CD4-positive, alpha-beta memory T cell (primary cell): ENCODE measurements at regions of chrX and their contacts with region 1.

Region 1: GRCh38 chrX:136646602-136647239 is 1.2 kb upstream of the CD40LG start:
- DNase-seq: peak; percentile 60 to 79 (median 64)
- H3K4me3 ChIP-seq: peak overlapping the region in 1 of 2 donors; percentile 3
- H3K4me3 Mint-ChIP-seq: peak overlapping the region; percentile 89 to 99 (median 97)
- H3K27ac ChIP-seq: peak overlapping the region; percentile 82
- H3K27ac Mint-ChIP-seq: peak overlapping the region; percentile 66 to 97 (median 91)
- H3K4me1 ChIP-seq: peaks cover 52% of the 10 kb centered on the region
- H3K4me1 Mint-ChIP-seq: peaks cover 34 to 60% (median 43%) of the 10 kb centered on the region in 4 donors
- H3K27me3 ChIP-seq: no peaks in the 10 kb centered on the region
- H3K27me3 Mint-ChIP-seq: no peaks in the 10 kb centered on the region

Region 2: GRCh38 chrX:136616987-136617685 is 29.6 kb before region 1 on chrX:
- CTCF ChIA-PET with region 1: interaction called, 8 read pairs
- POLR2A ChIA-PET with region 1: interaction called, 148 read pairs
- intact Hi-C with region 1: no loop called
- DNase-seq: peak in 4 of 5 donors; percentile 42 to 69 (median 48)
- H3K4me3 ChIP-seq: peak overlapping the region in 1 of 2 donors; percentile 18
- H3K4me3 Mint-ChIP-seq: peak overlapping the region; percentile 27 to 81 (median 68)
- H3K27ac ChIP-seq: peak overlapping the region; percentile 57
- H3K27ac Mint-ChIP-seq: peak overlapping the region; percentile 79 to 93 (median 87)
- H3K4me1 ChIP-seq: peaks cover 67% of the 10 kb centered on the region
- H3K4me1 Mint-ChIP-seq: peaks cover 36 to 70% (median 46%) of the 10 kb centered on the region in 4 donors
- H3K27me3 ChIP-seq: no peaks in the 10 kb centered on the region
- H3K27me3 Mint-ChIP-seq: no peaks in the 10 kb centered on the region

Region 3: GRCh38 chrX:136626237-136626636 is 20.5 kb before region 1 on chrX:
- CTCF ChIA-PET with region 1: interaction called, 4 read pairs
- POLR2A ChIA-PET with region 1: interaction called, 148 read pairs
- intact Hi-C with region 1: loop called (anchors 2 kb)
- DNase-seq: no peak
- H3K4me3 ChIP-seq: no peak overlapping the region
- H3K4me3 Mint-ChIP-seq: peak overlapping the region in 7 of 8 donors; percentile 15 to 82 (median 24)
- H3K27ac ChIP-seq: no peak overlapping the region
- H3K27ac Mint-ChIP-seq: peak overlapping the region in 6 of 7 donors; percentile 32 to 94 (median 76)
- H3K4me1 ChIP-seq: peaks cover 90% of the 10 kb centered on the region
- H3K4me1 Mint-ChIP-seq: peaks cover 59 to 91% (median 77%) of the 10 kb centered on the region in 4 donors
- H3K27me3 ChIP-seq: no peaks in the 10 kb centered on the region
- H3K27me3 Mint-ChIP-seq: no peaks in the 10 kb centered on the region

Region 4: GRCh38 chrX:136635235-136635634 is 11.5 kb before region 1 on chrX:
- CTCF ChIA-PET with region 1: interaction called, 11 read pairs
- POLR2A ChIA-PET with region 1: interaction called, 137 read pairs
- intact Hi-C with region 1: loop called (anchors 1 kb)
- DNase-seq: peak; percentile 56 to 68 (median 62)
- H3K4me3 ChIP-seq: peak overlapping the region in 1 of 2 donors; percentile 47
- H3K4me3 Mint-ChIP-seq: peak overlapping the region; percentile 51 to 88 (median 82)
- H3K27ac ChIP-seq: peak overlapping the region; percentile 56
- H3K27ac Mint-ChIP-seq: peak overlapping the region; percentile 78 to 96 (median 94)
- H3K4me1 ChIP-seq: peaks cover 97% of the 10 kb centered on the region
- H3K4me1 Mint-ChIP-seq: peaks cover 52 to 94% (median 73%) of the 10 kb centered on the region in 4 donors
- H3K27me3 ChIP-seq: no peaks in the 10 kb centered on the region
- H3K27me3 Mint-ChIP-seq: no peaks in the 10 kb centered on the region

Region 5: GRCh38 chrX:136658151-136658550 is 11.4 kb after region 1 on chrX:
- CTCF ChIA-PET with region 1: interaction called, 5 read pairs
- POLR2A ChIA-PET with region 1: interaction called, 87 read pairs
- intact Hi-C with region 1: loop called (anchors 1 kb)
- DNase-seq: peak in 1 of 5 donors; percentile 41
- H3K4me3 ChIP-seq: peak overlapping the region in 1 of 2 donors; percentile 23
- H3K4me3 Mint-ChIP-seq: peak overlapping the region; percentile 81 to 99 (median 97)
- H3K27ac ChIP-seq: peak overlapping the region; percentile 60
- H3K27ac Mint-ChIP-seq: peak overlapping the region; percentile 84 to 94 (median 92)
- H3K4me1 ChIP-seq: peaks cover 99% of the 10 kb centered on the region
- H3K4me1 Mint-ChIP-seq: peaks cover 57 to 99% (median 70%) of the 10 kb centered on the region in 4 donors
- H3K27me3 ChIP-seq: no peaks in the 10 kb centered on the region
- H3K27me3 Mint-ChIP-seq: no peaks in the 10 kb centered on the region

Region 6: DNA sequence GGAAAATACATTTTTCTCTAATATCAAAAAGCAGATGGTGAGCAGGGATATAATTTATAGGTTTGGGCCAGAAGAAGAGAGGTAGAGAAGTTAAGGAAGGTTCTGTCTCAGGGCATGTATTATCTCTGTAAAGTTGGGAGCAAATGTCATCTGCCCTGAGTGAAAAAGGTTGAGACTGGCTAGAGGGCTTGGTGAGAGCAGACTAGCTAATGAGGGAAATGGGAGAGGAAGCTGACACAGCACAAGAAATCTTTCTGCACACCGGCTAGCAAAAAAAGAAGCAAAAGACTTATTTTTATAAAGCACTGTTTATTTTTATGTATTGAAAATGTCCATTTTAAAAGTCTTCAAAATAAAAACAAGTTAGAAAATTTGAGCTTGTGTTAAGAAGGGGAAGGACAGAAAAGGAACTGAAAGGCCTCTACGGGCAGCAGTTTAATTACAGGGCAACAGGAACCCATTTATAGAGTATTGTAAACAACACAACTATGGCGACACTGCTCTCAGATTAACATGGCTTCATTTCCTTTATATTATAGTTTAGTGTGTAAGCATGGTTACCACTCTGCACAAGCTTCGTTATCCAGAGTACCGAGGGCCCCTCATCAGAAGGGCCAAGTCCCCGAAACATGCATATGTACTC is 18.7 kb after region 1 on chrX:
- CTCF ChIA-PET with region 1: interaction called, 3 read pairs
- POLR2A ChIA-PET with region 1: interaction called, 87 read pairs
- intact Hi-C with region 1: loop called (anchors 2 kb)
- DNase-seq: no peak
- H3K4me3 ChIP-seq: no peak overlapping the region
- H3K4me3 Mint-ChIP-seq: peak overlapping the region in 7 of 8 donors; percentile 33 to 83 (median 49)
- H3K27ac ChIP-seq: peak overlapping the region; percentile 4
- H3K27ac Mint-ChIP-seq: peak overlapping the region; percentile 69 to 95 (median 80)
- H3K4me1 ChIP-seq: peaks cover 95% of the 10 kb centered on the region
- H3K4me1 Mint-ChIP-seq: peaks cover 52 to 94% (median 71%) of the 10 kb centered on the region in 4 donors
- H3K27me3 ChIP-seq: no peaks in the 10 kb centered on the region
- H3K27me3 Mint-ChIP-seq: no peaks in the 10 kb centered on the region

Region 7: DNA sequence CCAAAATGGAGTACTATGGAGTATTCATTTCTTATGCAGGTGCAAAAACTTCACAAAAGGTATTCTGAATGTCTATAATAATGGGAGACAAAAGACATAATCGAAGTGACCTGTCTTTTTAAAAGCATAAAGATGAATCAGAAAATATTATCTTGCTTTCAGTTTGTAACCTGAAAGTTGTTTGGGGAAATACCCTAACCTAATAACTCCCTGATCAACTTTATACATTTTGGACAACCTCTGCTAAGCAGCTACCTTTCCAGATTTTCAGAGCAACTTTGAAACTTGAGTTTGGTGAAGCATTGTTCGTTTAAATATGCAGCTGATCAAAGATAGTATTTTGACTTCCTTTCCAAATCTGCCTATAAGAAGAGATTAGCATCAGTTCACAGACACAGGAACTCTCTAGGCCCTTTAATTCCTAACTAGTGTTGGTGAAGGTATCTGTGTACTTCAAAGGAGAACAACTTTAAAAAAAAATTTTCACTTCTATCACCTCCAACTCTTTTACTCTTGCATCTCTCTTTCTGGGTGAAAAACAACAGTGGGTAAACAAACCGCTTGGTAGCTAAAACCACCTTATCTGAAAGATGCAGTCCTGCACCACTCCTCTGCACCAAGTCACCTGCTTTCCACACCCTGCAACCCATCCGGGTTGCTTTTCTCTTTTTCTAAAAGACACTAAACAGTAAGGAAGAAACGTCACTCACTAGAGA is 27.7 kb after region 1 on chrX:
- CTCF ChIA-PET with region 1: interaction called, 5 read pairs
- POLR2A ChIA-PET with region 1: interaction called, 82 read pairs
- intact Hi-C with region 1: loop called (anchors 2 kb)
- DNase-seq: peak; percentile 64 to 79 (median 75)
- H3K4me3 ChIP-seq: peak overlapping the region in 1 of 2 donors; percentile 12
- H3K4me3 Mint-ChIP-seq: peak overlapping the region; percentile 37 to 91 (median 78)
- H3K27ac ChIP-seq: peak overlapping the region; percentile 58
- H3K27ac Mint-ChIP-seq: peak overlapping the region; percentile 89 to 99 (median 94)
- H3K4me1 ChIP-seq: peaks cover 98% of the 10 kb centered on the region
- H3K4me1 Mint-ChIP-seq: peaks cover 68 to 100% (median 79%) of the 10 kb centered on the region in 4 donors
- H3K27me3 ChIP-seq: no peaks in the 10 kb centered on the region
- H3K27me3 Mint-ChIP-seq: no peaks in the 10 kb centered on the region

Region 8: DNA sequence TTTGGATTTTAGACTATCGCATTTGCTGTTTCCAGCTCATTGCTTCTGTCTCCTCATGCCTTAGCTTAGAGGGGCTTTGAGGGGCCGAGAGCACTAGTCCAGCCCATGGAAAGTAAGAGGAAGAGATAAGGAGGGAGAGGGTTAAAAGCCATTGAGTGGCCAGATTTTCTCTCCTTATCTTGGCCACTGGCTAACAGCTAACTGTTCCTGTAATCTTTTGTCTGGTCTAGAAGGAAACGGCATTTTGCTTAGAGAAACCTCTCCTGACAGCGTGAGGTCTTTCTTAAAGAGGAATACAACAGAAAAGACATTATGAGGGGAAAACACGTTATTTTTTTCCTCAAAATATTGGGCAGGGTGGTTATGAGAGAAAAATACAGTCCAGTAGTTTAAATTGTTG is 379.2 kb after region 1 on chrX:
- CTCF ChIA-PET with region 1: no interaction called
- POLR2A ChIA-PET with region 1: no interaction called
- intact Hi-C with region 1: no loop called
- DNase-seq: no peak
- H3K4me3 ChIP-seq: no peak overlapping the region
- H3K4me3 Mint-ChIP-seq: no peak overlapping the region
- H3K27ac ChIP-seq: no peak overlapping the region
- H3K27ac Mint-ChIP-seq: no peak overlapping the region
- H3K4me1 ChIP-seq: no peaks in the 10 kb centered on the region
- H3K4me1 Mint-ChIP-seq: peaks cover 0 to 1% (median under 1%) of the 10 kb centered on the region in 4 donors
- H3K27me3 ChIP-seq: no peaks in the 10 kb centered on the region
- H3K27me3 Mint-ChIP-seq: peaks cover 10 to 12% of the 10 kb centered on the region in 2 donors